ENCODE measurements at regions of chr19 and their contacts with region 1.

Region 1: GRCh38 chr19:53853707-53854106 is 14.0 kb upstream of the MYADM start:
- DNase-seq: no peak
- ATAC-seq: no peak
- H3K4me3 ChIP-seq: no peak overlapping the region
- H3K4me3 Mint-ChIP-seq: no peak overlapping the region
- H3K27ac ChIP-seq: no peak overlapping the region
- H3K27ac Mint-ChIP-seq: no peak overlapping the region
- H3K4me1 ChIP-seq: peaks cover 18% of the 10 kb centered on the region
- H3K4me1 Mint-ChIP-seq: peaks cover 4% of the 10 kb centered on the region
- H3K27me3 ChIP-seq: peaks cover 6 to 13% of the 10 kb centered on the region in 2 experiments
- H3K27me3 Mint-ChIP-seq: peaks cover 28% of the 10 kb centered on the region
- CTCF ChIP-seq: no peak

Region 2: DNA sequence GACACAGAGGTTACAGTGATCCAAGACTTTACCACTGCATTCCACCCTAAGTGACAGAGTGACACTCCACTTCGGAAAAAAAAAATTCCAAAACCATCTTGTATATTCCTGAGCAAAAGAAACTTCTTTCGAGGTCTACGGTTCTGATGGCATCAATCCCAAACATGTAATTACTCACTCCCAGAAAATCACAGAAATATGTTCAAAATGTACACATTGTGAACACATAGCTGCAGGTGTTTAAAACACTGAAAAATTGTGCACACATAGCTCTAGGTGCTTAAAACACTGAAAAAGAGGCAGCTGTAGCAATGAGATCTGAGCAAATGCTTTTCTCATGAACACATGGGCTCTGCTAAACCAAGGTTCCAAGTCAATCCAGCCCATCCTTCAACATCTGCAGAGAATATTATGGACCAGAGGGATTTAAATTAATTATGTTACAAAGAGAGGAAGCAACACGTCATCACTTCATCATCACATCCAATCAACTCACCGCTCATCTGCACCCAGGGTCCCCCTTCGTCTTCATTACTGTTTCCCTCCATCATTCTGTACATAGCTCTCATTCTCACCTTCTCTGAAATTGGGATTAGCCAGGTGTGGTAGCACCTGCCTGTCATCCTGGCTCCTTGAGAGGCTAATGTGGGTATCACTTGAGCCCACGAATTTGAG is 982.1 kb before region 1 on chr19:
- CTCF ChIA-PET with region 1: no interaction called
- POLR2A ChIA-PET with region 1: no interaction called
- intact Hi-C with region 1: loop called in 1 of 2 experiments (anchors 10 kb)
- DNase-seq: no peak
- ATAC-seq: no peak
- H3K4me3 ChIP-seq: no peak overlapping the region
- H3K4me3 Mint-ChIP-seq: no peak overlapping the region
- H3K27ac ChIP-seq: no peak overlapping the region
- H3K27ac Mint-ChIP-seq: no peak overlapping the region
- H3K4me1 ChIP-seq: no peaks in the 10 kb centered on the region
- H3K4me1 Mint-ChIP-seq: no peaks in the 10 kb centered on the region
- H3K27me3 ChIP-seq: no peaks in the 10 kb centered on the region
- H3K27me3 Mint-ChIP-seq: no peaks in the 10 kb centered on the region
- CTCF ChIP-seq: no peak

Region 3: DNA sequence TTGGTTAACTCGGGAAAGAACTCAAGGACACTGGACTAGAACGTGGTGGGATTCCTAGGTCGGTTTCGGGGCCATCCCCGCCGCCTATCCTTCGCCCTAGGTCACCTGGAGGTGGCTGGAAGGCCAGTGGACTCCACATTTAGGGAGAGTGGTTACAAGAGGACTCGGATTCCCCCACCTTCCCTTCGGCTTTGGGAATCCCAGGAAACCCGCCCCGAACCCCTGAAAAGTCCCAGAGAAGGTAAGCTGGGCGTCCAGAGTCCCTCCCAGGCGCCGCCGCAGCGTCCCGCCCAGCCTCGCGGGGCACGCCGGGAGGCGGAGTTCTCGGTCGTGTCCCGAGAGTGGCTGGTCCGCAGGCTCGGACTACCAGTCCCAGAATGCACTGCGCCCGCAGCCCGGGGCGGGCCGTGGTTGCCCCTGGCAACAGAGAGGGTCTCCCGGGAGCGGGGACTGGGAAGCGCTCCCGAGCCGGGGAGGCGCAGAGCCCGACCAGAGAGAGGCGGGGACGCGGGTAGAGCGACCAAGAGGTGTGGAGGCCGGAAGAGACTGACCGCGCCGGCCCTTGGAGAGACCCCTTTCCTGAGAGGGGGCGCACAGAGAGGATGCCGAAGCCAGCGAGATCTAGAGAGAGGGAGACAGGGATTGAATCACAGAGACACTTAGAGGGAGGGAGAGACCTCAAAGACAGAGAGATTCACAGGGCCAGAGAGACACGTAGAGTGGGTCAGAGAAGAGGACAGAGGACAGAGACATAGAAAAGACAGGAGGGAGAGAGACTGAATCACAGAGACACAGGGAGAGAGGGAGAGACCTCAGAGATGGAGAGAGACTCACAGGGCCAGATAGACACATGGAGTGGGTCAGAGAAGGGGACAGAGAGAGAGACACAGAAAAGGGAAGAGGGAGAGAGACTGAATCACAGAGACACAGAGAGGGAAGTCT is 25.7 kb after region 1 on chr19:
- CTCF ChIA-PET with region 1: interaction called, 8 read pairs
- POLR2A ChIA-PET with region 1: interaction called, 4 read pairs
- intact Hi-C with region 1: loop called (anchors 1 kb)
- DNase-seq: peak; percentile 66 to 90 (median 75)
- ATAC-seq: peak; percentile 78
- H3K4me3 ChIP-seq: peak overlapping the region; percentile 58
- H3K4me3 Mint-ChIP-seq: no peak overlapping the region
- H3K27ac ChIP-seq: no peak overlapping the region
- H3K27ac Mint-ChIP-seq: peak overlapping the region; percentile 51
- H3K4me1 ChIP-seq: peaks cover 81% of the 10 kb centered on the region
- H3K4me1 Mint-ChIP-seq: peaks cover 48% of the 10 kb centered on the region
- H3K27me3 ChIP-seq: peaks cover 44 to 48% of the 10 kb centered on the region in 2 experiments
- H3K27me3 Mint-ChIP-seq: peaks cover 28% of the 10 kb centered on the region
- CTCF ChIP-seq: no peak

Measured in CD4-positive, alpha-beta T cell (primary cell).